Vagina (tissue), 2 donors: ENCODE measurements at regions of chr6 and their contacts with region 1.

Region 1: GRCh38 chr6:35342258-35343091 is at the start of gene PPARD:
- DNase-seq: peak; percentile 98
- H3K4me3 ChIP-seq: peak within 1 kb of the TSS; percentile 62 to 86
- H3K27ac ChIP-seq: peak within 1 kb of the TSS; percentile 88
- H3K4me1 ChIP-seq: peaks cover 27% of the 10 kb centered on the region
- H3K27me3 ChIP-seq: no peaks in the 10 kb centered on the region
- CTCF ChIP-seq: peak; percentile 97 to 99 (median 99)
- POLR2A ChIP-seq: peak; percentile 46 to 74
- total RNA-seq, gene PPARD: 21.9 TPM

Region 2: DNA sequence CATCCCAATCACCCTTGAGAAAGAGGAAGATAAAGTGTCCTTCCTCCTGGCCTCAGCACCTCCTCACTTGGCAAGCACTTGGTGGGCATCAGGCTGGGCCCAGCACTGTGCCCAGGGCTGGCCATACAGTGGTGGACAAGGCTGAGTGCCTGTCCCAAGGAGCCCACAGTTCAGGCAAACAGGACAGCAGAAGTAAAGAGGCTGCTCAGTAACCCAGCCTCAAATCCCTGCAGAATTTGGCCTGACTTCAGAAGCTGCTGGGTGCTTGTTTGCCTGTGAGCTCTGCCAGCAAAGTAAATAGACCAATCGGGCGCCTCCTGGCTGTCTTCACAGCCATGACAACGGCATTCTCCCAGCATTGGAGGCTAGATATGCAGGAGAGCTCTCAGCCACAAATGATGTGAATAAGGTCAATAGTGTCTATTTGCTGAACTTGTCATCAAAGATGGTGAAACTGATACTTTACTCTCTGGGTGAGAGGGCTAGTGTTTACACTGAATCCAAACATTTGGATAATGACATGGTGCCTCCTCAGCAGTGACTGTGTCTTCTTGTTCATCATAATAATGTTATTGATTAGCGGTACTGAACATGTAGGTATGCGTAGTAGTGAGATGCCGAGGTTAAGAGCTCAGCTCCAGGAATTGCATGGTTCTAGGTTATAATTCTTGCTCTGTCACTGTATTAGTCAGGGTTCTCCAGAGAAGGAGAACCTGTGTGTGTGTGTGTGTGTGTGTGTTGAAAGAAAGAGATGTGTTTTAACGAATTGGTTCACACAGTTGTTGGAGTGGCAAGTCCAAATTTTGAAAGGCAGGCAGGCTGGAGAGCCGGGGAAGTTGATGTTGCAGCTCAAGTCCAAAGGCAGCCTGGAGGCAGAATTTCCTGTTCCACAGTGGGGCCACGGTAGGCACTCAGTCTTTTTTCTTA is 72.9 kb after region 1 on chr6:
- intact Hi-C with region 1: loop called (anchors 5 kb)
- DNase-seq: no peak
- H3K4me3 ChIP-seq: no peak overlapping the region
- H3K27ac ChIP-seq: no peak overlapping the region
- H3K4me1 ChIP-seq: peaks cover 5% of the 10 kb centered on the region
- H3K27me3 ChIP-seq: no peaks in the 10 kb centered on the region
- CTCF ChIP-seq: peak; percentile 8 to 56 (median 29)
- POLR2A ChIP-seq: no peak

Region 3: GRCh38 chr6:35452186-35453090 is 110.0 kb after region 1 on chr6 and contains the start of gene FANCE:
- intact Hi-C with region 1: loop called (anchors 5 kb)
- DNase-seq: peak in 1 of 2 donors; percentile 95
- H3K4me3 ChIP-seq: peak within 1 kb of the TSS; percentile 62 to 77
- H3K27ac ChIP-seq: peak within 1 kb of the TSS; percentile 84
- H3K4me1 ChIP-seq: peaks cover 39% of the 10 kb centered on the region
- H3K27me3 ChIP-seq: no peaks in the 10 kb centered on the region
- CTCF ChIP-seq: no peak
- POLR2A ChIP-seq: peak in 1 of 2 donors; percentile 58
- total RNA-seq, gene FANCE: 10.1 TPM